Activated naive CD4-positive, alpha-beta T cell treated with anti-CD3 and anti-CD28 coated beads for 36 hours (primary cell): ENCODE measurements at regions of chr1 and their contacts with region 1.

Region 1: DNA sequence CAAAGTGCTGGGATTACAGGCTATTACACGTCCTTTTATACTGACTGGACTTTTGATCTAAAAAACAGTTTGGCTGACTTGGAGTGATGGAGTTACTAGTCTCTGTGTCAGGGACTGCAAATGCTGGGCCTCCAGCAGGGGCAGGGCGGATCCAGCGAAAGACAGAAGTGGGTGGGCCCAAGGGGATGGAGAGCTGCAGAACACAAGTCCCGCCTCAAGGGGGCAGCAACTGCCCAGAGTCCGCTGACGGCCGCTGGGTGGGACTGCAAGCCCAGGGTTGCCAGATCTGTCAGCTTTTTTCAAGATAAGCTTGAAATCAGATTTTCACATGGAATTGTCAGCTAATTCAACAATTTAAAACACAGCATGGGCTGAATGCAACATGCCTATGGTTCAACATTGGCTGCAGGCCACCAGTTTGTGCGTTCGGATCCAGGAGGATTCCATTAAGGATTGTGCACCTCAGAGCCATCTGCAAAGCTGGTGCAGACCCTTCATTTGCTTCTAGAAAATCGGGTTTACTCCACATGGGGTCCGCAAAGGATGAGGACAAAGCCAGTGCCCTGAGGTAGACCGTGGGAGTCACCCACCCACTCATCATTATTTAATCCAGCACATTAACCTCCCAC is 10.7 kb downstream of the STMN1 start:
- DNase-seq: peak; percentile 92
- H3K4me3 Mint-ChIP-seq: no peak overlapping the region
- H3K27ac Mint-ChIP-seq: no peak overlapping the region
- H3K4me1 Mint-ChIP-seq: peaks cover 17% of the 10 kb centered on the region
- H3K27me3 Mint-ChIP-seq: no peaks in the 10 kb centered on the region

Region 2: GRCh38 chr1:25338188-25338981 is 557.1 kb before region 1 on chr1 and contains the start of gene TMEM50A:
- CTCF ChIA-PET with region 1: no interaction called
- intact Hi-C with region 1: no loop called
- DNase-seq: peak; percentile 91
- H3K4me3 Mint-ChIP-seq: peak within 1 kb of the TSS; percentile 93
- H3K27ac Mint-ChIP-seq: peak within 1 kb of the TSS; percentile 93
- H3K4me1 Mint-ChIP-seq: peaks cover 28% of the 10 kb centered on the region
- H3K27me3 Mint-ChIP-seq: no peaks in the 10 kb centered on the region
- total RNA-seq, gene TMEM50A: 96.2 to 98.3 TPM

Region 3: DNA sequence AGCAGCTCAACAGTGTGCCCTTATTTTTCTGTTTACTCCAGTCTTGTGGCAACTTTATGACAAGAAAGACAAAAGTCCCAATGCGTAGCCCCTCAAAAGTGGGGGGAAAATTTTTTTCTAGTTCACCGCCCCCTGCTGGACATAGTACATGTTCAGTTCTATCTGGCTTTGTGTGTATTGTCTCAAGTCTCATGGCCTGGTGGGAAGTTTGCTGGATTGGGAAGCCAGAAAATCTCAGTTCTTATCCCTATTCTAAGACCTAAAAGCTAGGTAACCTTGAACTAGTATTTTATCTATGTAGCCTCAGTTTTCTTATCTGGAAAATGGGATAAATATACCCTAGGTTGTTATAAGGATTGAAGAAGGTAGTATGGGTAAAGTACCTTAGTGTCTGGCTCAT is 407.9 kb before region 1 on chr1:
- CTCF ChIA-PET with region 1: no interaction called
- intact Hi-C with region 1: no loop called
- DNase-seq: peak; percentile 51
- H3K4me3 Mint-ChIP-seq: no peak overlapping the region
- H3K27ac Mint-ChIP-seq: peak overlapping the region; percentile 5
- H3K4me1 Mint-ChIP-seq: peaks cover 5% of the 10 kb centered on the region
- H3K27me3 Mint-ChIP-seq: no peaks in the 10 kb centered on the region

Region 4: GRCh38 chr1:25837262-25837875 is 58.1 kb before region 1 on chr1:
- CTCF ChIA-PET with region 1: interaction called, 3 read pairs
- intact Hi-C with region 1: loop called (anchors 5 kb)
- DNase-seq: no peak
- H3K4me3 Mint-ChIP-seq: no peak overlapping the region
- H3K27ac Mint-ChIP-seq: no peak overlapping the region
- H3K4me1 Mint-ChIP-seq: peaks cover 1% of the 10 kb centered on the region
- H3K27me3 Mint-ChIP-seq: no peaks in the 10 kb centered on the region

Region 5: DNA sequence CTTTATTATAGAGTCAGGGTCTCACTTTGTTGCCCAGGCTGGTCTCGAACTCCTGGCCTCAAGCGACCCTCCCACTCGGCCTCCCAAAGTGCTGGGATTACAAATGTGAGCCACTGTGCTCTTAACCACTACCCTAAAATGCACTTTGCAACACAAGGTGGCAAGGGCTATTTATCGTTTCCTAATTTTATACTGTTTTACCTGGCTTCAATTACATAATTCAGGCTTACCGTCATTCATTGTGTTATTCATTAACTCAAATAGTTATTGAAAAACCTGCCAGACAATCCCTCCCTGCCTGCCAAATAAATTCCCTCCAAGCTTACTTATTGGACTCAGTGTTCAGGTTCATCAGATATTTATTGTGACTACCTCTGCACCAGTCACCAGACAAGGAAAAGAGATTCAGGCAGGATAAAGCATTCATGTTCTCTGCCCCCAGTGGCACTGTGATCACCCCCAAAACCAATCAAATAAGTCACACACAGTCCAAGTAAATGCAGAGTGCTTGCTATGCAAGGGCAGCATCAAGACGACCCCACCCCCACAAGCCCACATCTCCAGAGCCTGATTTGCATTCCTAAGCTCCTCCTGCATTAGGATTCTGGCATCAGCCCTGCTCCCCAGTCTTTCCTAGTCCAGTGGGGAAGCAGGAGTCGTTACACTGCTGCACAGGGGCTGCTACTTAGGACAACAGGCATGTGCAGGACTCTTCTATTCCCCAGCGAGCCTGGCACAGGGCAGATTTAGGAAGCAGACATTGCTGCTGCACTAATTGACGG is 28.1 kb before region 1 on chr1:
- CTCF ChIA-PET with region 1: no interaction called
- intact Hi-C with region 1: no loop called
- DNase-seq: no peak
- H3K4me3 Mint-ChIP-seq: no peak overlapping the region
- H3K27ac Mint-ChIP-seq: no peak overlapping the region
- H3K4me1 Mint-ChIP-seq: no peaks in the 10 kb centered on the region
- H3K27me3 Mint-ChIP-seq: no peaks in the 10 kb centered on the region

Region 6: DNA sequence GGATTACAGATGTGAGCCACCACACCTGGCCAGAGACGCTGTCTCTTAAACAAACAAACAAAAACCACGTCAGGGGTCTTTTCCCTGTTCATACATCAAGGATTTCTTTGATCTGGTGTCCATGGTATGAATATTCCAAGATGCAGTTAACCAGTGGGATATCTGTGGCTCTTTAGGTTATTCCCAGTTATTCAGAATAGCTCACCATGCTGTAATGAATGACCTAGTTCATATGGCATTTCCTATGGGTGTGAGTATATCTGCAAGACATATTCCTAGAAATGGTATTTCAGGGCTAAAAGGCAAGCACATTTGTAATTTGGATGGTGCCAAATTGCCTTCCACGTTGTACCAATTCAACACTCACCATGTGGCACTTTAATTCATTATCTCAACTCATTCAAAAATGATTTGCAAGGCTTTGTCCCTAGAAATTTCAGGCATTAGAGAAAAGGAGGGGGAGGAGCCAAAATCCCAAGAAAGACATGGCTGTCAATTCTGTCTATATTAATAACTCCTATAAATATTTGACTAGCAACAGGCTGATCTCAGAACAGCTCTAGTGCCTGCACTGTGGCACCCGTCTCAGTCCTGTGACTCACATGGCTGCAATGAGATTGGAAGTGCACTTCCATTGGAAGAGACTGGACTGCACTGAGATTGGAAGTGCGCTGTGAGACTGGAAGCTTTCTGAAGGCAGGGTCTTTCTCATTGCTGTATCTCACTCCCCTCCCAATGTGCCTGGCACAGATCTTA is 16.8 kb after region 1 on chr1:
- CTCF ChIA-PET with region 1: interaction called, 23 read pairs
- intact Hi-C with region 1: no loop called
- DNase-seq: no peak
- H3K4me3 Mint-ChIP-seq: no peak overlapping the region
- H3K27ac Mint-ChIP-seq: no peak overlapping the region
- H3K4me1 Mint-ChIP-seq: peaks cover 2% of the 10 kb centered on the region
- H3K27me3 Mint-ChIP-seq: no peaks in the 10 kb centered on the region

Region 7: DNA sequence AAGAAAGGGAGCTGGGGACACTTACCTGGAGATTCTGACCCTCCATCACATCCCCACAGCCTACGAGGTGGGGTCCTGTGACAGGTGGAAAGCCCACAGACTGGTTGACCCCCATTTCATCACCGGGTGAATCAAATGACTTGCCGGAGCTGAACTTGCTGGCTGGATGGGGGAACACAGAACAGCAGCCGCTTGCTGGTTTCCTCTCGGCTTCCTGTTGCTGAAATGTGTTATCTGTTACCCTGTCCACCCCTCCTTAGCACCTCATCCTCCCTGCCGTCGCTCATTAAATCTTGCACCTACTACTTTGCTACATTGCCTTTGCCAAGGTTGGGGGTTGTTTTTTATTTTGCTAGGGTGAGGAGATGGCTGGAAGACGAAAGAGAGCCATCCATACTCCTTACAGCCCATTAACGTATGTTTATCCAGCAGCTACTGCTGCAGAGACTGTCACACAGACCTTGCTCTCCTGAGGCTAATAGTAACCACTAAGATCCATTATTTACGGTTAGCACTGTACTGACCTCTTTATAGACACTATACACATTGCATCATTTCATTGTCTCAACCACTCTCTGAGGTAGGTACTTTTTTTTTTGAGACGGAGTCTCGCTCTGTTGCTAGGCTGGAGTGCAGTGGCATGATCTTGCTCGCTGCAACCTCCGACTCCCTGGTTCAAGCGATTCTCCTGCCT is 95.4 kb after region 1 on chr1:
- CTCF ChIA-PET with region 1: interaction called, 154 read pairs
- intact Hi-C with region 1: no loop called
- DNase-seq: peak; percentile 75
- H3K4me3 Mint-ChIP-seq: peak overlapping the region; percentile 73
- H3K27ac Mint-ChIP-seq: peak overlapping the region; percentile 82
- H3K4me1 Mint-ChIP-seq: peaks cover 51% of the 10 kb centered on the region
- H3K27me3 Mint-ChIP-seq: no peaks in the 10 kb centered on the region